ENCODE measurements at regions of chr13 and their contacts with region 1.

Region 1: DNA sequence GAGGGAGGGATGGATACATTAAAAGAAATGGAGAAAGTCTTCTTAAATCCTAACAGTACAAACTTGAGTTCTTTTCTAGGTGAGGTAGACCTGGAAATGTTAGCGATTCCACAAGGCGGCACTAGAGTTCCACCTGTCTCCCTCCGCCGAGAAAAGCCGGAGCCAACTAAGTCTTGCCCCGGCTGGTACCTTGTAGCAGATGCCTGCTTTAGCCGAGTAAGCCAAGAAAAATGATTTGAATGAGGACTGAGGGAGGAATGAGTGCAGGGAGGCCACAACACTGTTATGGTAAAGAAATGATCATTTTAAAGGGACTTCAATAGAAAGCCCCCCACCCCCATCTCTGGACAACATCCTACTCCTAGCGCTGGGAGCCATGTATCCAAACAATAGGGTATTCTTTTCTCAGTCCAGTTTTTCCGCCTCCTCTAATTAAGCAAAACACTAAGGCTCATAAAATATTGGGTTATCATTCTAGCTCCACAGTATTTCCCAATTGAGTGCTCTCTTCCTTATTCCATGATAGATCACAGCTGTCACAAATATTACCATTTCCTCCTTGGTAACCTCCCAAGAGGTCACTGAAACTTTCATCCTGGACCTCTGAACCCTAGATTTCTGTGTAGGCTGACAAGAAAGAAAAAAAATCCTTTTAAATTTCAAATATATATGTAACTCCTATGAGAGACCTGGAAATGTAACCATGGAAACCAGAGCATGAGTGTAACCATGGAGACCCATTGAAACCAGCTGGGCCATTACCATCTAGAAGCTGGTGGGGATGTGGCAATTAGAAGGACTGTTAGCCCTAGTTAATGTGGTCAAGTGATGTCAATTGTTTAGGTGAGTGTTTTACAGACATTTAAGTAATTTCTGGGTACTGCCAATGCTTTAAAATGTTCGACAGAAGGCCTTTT is 58.3 kb downstream of the GPALPP1 start:
- DNase-seq: peak; percentile 88
- H3K4me3 ChIP-seq: peak overlapping the region; percentile 17 to 64 (median 36)
- H3K27ac ChIP-seq: no peak overlapping the region
- H3K4me1 ChIP-seq: peaks cover 7% of the 10 kb centered on the region
- H3K27me3 ChIP-seq: peaks cover 0 to 4% of the 10 kb centered on the region in 2 experiments
- CTCF ChIP-seq: peak; percentile 82 to 84
- POLR2A ChIP-seq: no peak

Region 2: DNA sequence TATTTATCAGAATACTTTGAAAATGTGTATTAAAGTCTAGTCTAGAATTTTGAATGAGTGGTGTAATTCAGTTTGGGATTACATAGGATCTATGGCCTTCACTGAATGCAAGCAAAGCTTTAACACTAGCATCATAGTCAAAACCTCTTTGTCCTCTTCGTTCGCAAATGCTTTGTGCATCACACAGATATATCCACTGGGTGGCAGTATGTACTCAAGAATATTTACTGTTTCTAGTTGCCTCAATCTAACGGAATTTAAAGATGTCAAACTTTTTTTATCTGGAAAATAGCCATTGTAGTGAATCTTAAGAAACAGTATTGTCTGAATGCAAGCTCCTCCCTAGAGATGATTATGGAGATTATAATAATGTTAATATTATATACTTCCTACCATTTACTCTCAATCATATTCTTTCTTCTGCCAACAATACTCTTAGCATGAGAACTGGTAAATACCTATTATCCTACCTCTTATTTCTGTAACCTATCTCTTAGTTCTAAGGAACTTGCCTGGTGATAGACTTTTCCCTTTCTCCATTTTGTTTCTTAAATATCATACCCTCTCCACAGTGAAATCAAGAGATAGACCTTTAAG is 1142.1 kb before region 1 on chr13:
- CTCF ChIA-PET with region 1: interaction called, 4 read pairs
- POLR2A ChIA-PET with region 1: no interaction called
- dilution Hi-C with region 1: no loop called
- intact Hi-C with region 1: loop called (anchors 10 kb)
- DNase-seq: peak; percentile 68
- H3K4me3 ChIP-seq: no peak overlapping the region
- H3K27ac ChIP-seq: no peak overlapping the region
- H3K4me1 ChIP-seq: no peaks in the 10 kb centered on the region
- H3K27me3 ChIP-seq: peaks cover 0 to 6% of the 10 kb centered on the region in 2 experiments
- CTCF ChIP-seq: peak; percentile 43 to 45
- POLR2A ChIP-seq: no peak

Region 3: GRCh38 chr13:44908266-44908665 is 139.4 kb before region 1 on chr13:
- CTCF ChIA-PET with region 1: no interaction called
- POLR2A ChIA-PET with region 1: no interaction called
- dilution Hi-C with region 1: no loop called
- intact Hi-C with region 1: no loop called
- DNase-seq: no peak
- H3K4me3 ChIP-seq: no peak overlapping the region
- H3K27ac ChIP-seq: no peak overlapping the region
- H3K4me1 ChIP-seq: no peaks in the 10 kb centered on the region
- H3K27me3 ChIP-seq: no peaks in the 10 kb centered on the region
- CTCF ChIP-seq: no peak
- POLR2A ChIP-seq: no peak

Region 4: DNA sequence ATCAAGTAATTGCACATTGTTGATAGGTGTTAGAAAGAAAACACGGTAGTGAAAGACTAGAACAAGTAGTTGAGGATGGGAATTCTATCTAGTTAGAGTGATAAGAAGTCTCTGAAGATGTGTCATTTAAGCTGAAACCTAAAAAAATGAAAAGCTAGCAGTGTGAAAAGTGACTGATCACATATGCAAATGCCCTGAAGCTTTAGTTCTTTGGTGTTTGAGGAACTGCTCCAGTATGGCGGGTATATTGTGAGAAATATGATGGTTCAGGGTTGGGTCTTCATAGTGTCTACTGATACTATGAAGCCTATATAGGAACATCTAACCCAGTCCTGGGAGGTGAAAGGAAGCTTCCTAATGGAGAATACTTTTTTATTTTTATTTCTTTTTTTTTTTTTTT is 13.3 kb before region 1 on chr13:
- CTCF ChIA-PET with region 1: interaction called, 17 read pairs
- POLR2A ChIA-PET with region 1: no interaction called
- dilution Hi-C with region 1: no loop called
- intact Hi-C with region 1: no loop called
- DNase-seq: no peak
- H3K4me3 ChIP-seq: no peak overlapping the region
- H3K27ac ChIP-seq: no peak overlapping the region
- H3K4me1 ChIP-seq: no peaks in the 10 kb centered on the region
- H3K27me3 ChIP-seq: no peaks in the 10 kb centered on the region
- CTCF ChIP-seq: no peak
- POLR2A ChIP-seq: no peak

Region 5: DNA sequence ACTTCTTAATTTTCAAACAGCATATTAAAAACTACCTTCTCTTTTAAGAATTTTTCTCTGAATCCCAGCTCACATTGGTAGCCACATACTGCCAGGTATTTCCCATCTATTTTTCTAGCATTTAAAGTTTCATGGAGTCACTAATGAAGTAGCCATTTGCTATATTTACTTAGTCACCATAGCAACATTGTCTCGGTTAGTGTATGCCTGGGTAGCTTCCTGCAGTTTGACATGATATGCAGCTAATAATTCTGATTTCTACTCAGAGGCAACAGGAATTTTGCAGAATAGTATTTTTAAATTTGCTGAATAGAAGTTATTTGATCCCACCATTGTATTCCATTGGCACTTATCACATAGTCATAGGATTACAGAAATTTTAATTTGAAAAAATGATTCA is 184.1 kb after region 1 on chr13:
- CTCF ChIA-PET with region 1: no interaction called
- POLR2A ChIA-PET with region 1: no interaction called
- dilution Hi-C with region 1: no loop called
- intact Hi-C with region 1: no loop called
- DNase-seq: peak; percentile 29
- H3K4me3 ChIP-seq: no peak overlapping the region
- H3K27ac ChIP-seq: no peak overlapping the region
- H3K4me1 ChIP-seq: no peaks in the 10 kb centered on the region
- H3K27me3 ChIP-seq: no peaks in the 10 kb centered on the region
- CTCF ChIP-seq: no peak
- POLR2A ChIP-seq: no peak

Region 6: GRCh38 chr13:45280751-45281634 is 233.3 kb after region 1 on chr13:
- CTCF ChIA-PET with region 1: interaction called, 287 read pairs
- POLR2A ChIA-PET with region 1: interaction called, 4 read pairs
- dilution Hi-C with region 1: no loop called
- intact Hi-C with region 1: loop called (anchors 1 kb)
- DNase-seq: peak; percentile 79
- H3K4me3 ChIP-seq: no peak overlapping the region
- H3K27ac ChIP-seq: no peak overlapping the region
- H3K4me1 ChIP-seq: peaks cover 8% of the 10 kb centered on the region
- H3K27me3 ChIP-seq: no peaks in the 10 kb centered on the region
- CTCF ChIP-seq: peak; percentile 80 to 88
- POLR2A ChIP-seq: no peak

Region 7: GRCh38 chr13:45297456-45298205 is 250.0 kb after region 1 on chr13:
- CTCF ChIA-PET with region 1: interaction called, 12 read pairs
- POLR2A ChIA-PET with region 1: no interaction called
- dilution Hi-C with region 1: no loop called
- intact Hi-C with region 1: no loop called
- DNase-seq: no peak
- H3K4me3 ChIP-seq: no peak overlapping the region
- H3K27ac ChIP-seq: no peak overlapping the region
- H3K4me1 ChIP-seq: peaks cover 11% of the 10 kb centered on the region
- H3K27me3 ChIP-seq: peaks cover 0 to 5% of the 10 kb centered on the region in 2 experiments
- CTCF ChIP-seq: no peak
- POLR2A ChIP-seq: no peak

Region 8: DNA sequence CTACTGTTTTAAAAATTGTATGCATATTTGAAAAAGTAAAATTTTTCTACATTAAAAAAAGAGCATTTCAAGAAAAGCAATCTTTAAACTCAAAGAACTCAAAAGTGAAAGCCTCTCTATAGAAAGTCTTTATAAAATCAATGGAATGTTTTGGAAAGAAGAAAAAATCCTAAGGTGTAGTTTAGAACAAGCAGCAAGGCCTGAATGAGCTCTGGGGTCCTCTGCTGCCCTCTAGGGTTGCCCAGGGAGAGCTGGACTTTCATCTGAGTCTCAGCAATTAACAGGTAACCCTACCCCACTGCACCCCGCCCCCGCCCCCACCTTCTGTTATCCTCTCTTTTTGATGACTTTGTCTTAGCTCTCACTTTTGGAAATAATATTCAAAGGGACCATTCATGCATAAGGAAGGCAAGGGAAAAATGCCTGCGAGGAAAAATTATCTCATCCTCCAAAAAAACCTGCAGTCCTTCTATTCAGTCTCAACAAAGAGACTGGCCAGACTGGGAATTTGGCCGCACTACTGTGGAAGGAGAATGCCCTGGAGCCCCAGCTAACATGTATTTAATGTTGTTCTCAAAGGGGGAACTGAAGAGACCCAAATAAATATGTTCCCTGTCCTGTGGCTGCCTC is 346.4 kb after region 1 on chr13:
- CTCF ChIA-PET with region 1: interaction called, 17 read pairs
- POLR2A ChIA-PET with region 1: no interaction called
- dilution Hi-C with region 1: no loop called
- intact Hi-C with region 1: loop called (anchors 1 kb)
- DNase-seq: peak; percentile 55
- H3K4me3 ChIP-seq: no peak overlapping the region
- H3K27ac ChIP-seq: no peak overlapping the region
- H3K4me1 ChIP-seq: peaks cover 45% of the 10 kb centered on the region
- H3K27me3 ChIP-seq: no peaks in the 10 kb centered on the region
- CTCF ChIP-seq: peak; percentile 31 to 73
- POLR2A ChIP-seq: no peak

Region 9: GRCh38 chr13:45406421-45406820 is 358.8 kb after region 1 on chr13:
- CTCF ChIA-PET with region 1: no interaction called
- POLR2A ChIA-PET with region 1: no interaction called
- dilution Hi-C with region 1: no loop called
- intact Hi-C with region 1: no loop called
- DNase-seq: no peak
- H3K4me3 ChIP-seq: no peak overlapping the region
- H3K27ac ChIP-seq: no peak overlapping the region
- H3K4me1 ChIP-seq: no peaks in the 10 kb centered on the region
- H3K27me3 ChIP-seq: no peaks in the 10 kb centered on the region
- CTCF ChIP-seq: no peak
- POLR2A ChIP-seq: no peak

Measured in endothelial cell of umbilical vein (primary cell).